CD8-positive, alpha-beta T cell (primary cell): ENCODE measurements at regions of chr7 and their contacts with region 1.

Region 1: GRCh38 chr7:35424869-35425495 is 171.1 kb upstream of the TBX20 start:
- DNase-seq: peak; percentile 9 to 74 (median 56)
- ATAC-seq: peak; percentile 86
- H3K4me3 ChIP-seq: no peak overlapping the region
- H3K4me3 Mint-ChIP-seq: no peak overlapping the region
- H3K27ac ChIP-seq: no peak overlapping the region
- H3K27ac Mint-ChIP-seq: no peak overlapping the region
- H3K4me1 ChIP-seq: no peaks in the 10 kb centered on the region
- H3K4me1 Mint-ChIP-seq: no peaks in the 10 kb centered on the region
- H3K27me3 ChIP-seq: no peaks in the 10 kb centered on the region
- H3K27me3 Mint-ChIP-seq: peaks cover 25% of the 10 kb centered on the region
- CTCF ChIP-seq: peak; percentile 75

Region 2: GRCh38 chr7:34184466-34184865 is 1240.5 kb before region 1 on chr7:
- CTCF ChIA-PET with region 1: no interaction called
- POLR2A ChIA-PET with region 1: no interaction called
- intact Hi-C with region 1: no loop called
- DNase-seq: no peak
- ATAC-seq: no peak
- H3K4me3 ChIP-seq: no peak overlapping the region
- H3K4me3 Mint-ChIP-seq: no peak overlapping the region
- H3K27ac ChIP-seq: no peak overlapping the region
- H3K27ac Mint-ChIP-seq: no peak overlapping the region
- H3K4me1 ChIP-seq: no peaks in the 10 kb centered on the region
- H3K4me1 Mint-ChIP-seq: no peaks in the 10 kb centered on the region
- H3K27me3 ChIP-seq: no peaks in the 10 kb centered on the region
- H3K27me3 Mint-ChIP-seq: no peaks in the 10 kb centered on the region
- CTCF ChIP-seq: no peak

Region 3: DNA sequence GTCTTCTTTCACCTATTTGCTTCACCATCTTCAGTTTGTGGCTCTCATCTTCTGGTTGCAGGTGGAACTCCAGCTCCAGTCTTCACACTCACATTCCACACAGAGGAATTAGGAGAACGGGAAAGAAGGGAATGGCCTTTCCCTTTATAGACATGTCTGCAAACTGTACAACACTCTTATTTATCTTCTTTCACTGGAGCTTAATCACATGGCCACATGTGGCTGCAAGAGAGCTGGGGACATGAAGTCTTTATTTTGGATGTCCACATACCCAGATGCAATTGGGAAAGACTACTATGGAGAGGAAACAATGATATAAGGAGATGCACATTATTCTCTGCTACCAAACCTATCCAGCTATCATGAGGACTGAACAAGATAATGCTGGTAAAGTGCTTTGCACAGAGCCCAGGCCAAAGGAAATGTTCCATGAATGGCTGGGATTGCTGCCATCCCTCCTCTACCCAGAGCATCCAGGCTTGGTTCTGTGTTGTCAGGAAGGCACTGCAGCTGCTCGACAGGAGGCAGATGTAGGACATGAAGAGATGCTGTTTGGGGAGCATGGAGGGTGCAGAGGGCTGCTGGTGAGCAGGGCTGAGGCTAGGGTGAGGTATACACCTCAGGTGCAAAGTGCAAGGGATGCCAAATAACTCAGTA is 12.8 kb after region 1 on chr7:
- CTCF ChIA-PET with region 1: interaction called, 18 read pairs
- POLR2A ChIA-PET with region 1: no interaction called
- intact Hi-C with region 1: no loop called
- DNase-seq: no peak
- ATAC-seq: no peak
- H3K4me3 ChIP-seq: no peak overlapping the region
- H3K4me3 Mint-ChIP-seq: no peak overlapping the region
- H3K27ac ChIP-seq: no peak overlapping the region
- H3K27ac Mint-ChIP-seq: no peak overlapping the region
- H3K4me1 ChIP-seq: no peaks in the 10 kb centered on the region
- H3K4me1 Mint-ChIP-seq: no peaks in the 10 kb centered on the region
- H3K27me3 ChIP-seq: no peaks in the 10 kb centered on the region
- H3K27me3 Mint-ChIP-seq: peaks cover 2% of the 10 kb centered on the region
- CTCF ChIP-seq: no peak

Region 4: GRCh38 chr7:35906191-35906908 is 481.4 kb after region 1 on chr7:
- CTCF ChIA-PET with region 1: interaction called, 8 read pairs
- POLR2A ChIA-PET with region 1: no interaction called
- intact Hi-C with region 1: loop called in 1 of 2 experiments (anchors 1 kb)
- DNase-seq: peak; percentile 44 to 86 (median 69)
- ATAC-seq: peak; percentile 94
- H3K4me3 ChIP-seq: no peak overlapping the region
- H3K4me3 Mint-ChIP-seq: no peak overlapping the region
- H3K27ac ChIP-seq: no peak overlapping the region
- H3K27ac Mint-ChIP-seq: no peak overlapping the region
- H3K4me1 ChIP-seq: no peaks in the 10 kb centered on the region
- H3K4me1 Mint-ChIP-seq: peaks cover 19% of the 10 kb centered on the region
- H3K27me3 ChIP-seq: no peaks in the 10 kb centered on the region
- H3K27me3 Mint-ChIP-seq: no peaks in the 10 kb centered on the region
- CTCF ChIP-seq: peak; percentile 95

Region 5: DNA sequence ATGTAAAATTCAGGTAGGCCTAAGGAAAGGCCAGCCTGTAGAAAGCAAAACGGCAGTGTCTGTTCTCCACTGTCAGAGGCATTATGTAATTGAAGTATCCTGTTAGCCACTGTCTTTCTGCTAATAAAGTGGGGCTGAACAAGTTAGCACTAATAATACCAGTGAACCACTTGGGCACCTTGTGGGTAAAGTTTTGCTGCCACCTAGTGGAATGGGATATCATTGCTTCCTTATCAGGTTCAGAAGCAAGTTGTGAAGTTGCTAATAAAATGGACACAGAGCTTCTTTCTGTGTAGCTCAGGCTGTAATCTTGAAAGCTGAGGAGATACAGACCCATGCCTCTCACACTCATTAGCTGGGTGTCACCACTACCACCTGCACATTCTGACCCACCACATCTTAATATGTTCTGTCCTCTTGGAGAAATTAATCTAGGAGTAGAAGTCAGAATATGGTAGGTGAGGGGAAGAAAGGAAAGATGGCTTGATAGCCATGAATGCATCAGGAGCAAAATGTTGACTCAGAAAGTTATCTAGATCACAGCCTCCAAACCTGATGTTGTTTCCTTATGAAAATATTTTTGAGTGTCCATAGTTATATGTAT is 551.0 kb after region 1 on chr7:
- CTCF ChIA-PET with region 1: no interaction called
- POLR2A ChIA-PET with region 1: no interaction called
- intact Hi-C with region 1: loop called in 1 of 2 experiments (anchors 5 kb)
- DNase-seq: peak in 6 of 9 experiments; percentile 27 to 81 (median 46)
- ATAC-seq: peak; percentile 76
- H3K4me3 ChIP-seq: no peak overlapping the region
- H3K4me3 Mint-ChIP-seq: no peak overlapping the region
- H3K27ac ChIP-seq: no peak overlapping the region
- H3K27ac Mint-ChIP-seq: no peak overlapping the region
- H3K4me1 ChIP-seq: no peaks in the 10 kb centered on the region
- H3K4me1 Mint-ChIP-seq: peaks cover 4% of the 10 kb centered on the region
- H3K27me3 ChIP-seq: peaks cover 3 to 7% of the 10 kb centered on the region in 2 experiments
- H3K27me3 Mint-ChIP-seq: peaks cover 15% of the 10 kb centered on the region
- CTCF ChIP-seq: peak; percentile 80